ENCODE measurements at regions of chr5 and their contacts with region 1.

Region 1: GRCh38 chr5:96595300-96596090 is 66.7 kb upstream of the CAST start:
- DNase-seq: peak; percentile 69
- H3K4me3 Mint-ChIP-seq: no peak overlapping the region
- H3K27ac Mint-ChIP-seq: no peak overlapping the region
- H3K4me1 Mint-ChIP-seq: peaks cover 8% of the 10 kb centered on the region
- H3K27me3 Mint-ChIP-seq: peaks cover 31% of the 10 kb centered on the region

Region 2: DNA sequence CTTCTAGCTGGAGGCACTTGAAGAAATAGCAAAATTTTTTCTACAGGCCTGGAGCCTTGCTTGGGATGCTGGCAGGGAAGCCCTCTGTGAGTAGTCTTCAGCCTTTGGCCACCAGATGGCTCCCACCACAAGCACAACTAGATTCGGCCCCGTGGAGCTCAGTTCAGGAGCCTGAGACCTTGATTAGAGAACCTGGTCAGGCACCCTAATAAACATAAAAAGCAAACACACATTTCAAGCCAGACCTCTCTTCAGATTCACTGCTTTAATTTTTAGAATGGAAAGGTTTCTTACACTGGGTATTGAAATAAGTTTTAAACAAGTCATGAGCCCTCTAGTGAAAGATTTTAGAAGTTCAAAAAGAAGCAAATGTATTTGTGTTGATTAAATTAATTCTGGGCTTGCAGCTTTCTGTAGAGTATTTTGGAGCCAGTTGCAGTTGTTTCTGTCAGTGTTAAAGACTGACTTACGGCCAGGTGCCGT is 814.4 kb before region 1 on chr5:
- intact Hi-C with region 1: loop called (anchors 10 kb)
- DNase-seq: peak; percentile 90
- H3K4me3 Mint-ChIP-seq: peak overlapping the region; percentile 56
- H3K27ac Mint-ChIP-seq: no peak overlapping the region
- H3K4me1 Mint-ChIP-seq: peaks cover 16% of the 10 kb centered on the region
- H3K27me3 Mint-ChIP-seq: peaks cover 7% of the 10 kb centered on the region

Region 3: DNA sequence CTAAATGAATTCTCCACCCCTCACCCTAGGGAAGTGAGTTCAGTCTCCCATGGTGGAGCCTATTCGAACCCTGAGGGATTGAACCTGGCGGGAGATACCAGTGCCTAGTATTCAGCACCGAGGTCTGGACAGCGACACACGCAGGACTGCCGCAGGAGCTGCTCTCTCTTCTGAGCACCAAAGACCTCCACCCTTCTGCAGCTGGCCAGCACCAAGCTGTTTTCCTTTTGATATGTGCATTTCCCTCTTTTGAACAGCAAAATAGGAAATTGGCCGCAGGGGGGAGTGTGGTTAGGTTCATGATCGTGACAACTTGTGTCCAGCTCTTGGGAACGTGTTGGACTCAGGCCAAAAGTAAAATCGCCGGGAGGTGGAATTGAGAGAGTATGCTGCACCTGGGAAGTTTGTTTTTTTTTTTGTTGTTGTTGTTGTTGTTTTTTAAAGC is 161.3 kb before region 1 on chr5:
- intact Hi-C with region 1: loop called (anchors 10 kb)
- DNase-seq: peak; percentile 81
- H3K4me3 Mint-ChIP-seq: no peak overlapping the region
- H3K27ac Mint-ChIP-seq: no peak overlapping the region
- H3K4me1 Mint-ChIP-seq: peaks cover 12% of the 10 kb centered on the region
- H3K27me3 Mint-ChIP-seq: peaks cover 64% of the 10 kb centered on the region

Region 4: DNA sequence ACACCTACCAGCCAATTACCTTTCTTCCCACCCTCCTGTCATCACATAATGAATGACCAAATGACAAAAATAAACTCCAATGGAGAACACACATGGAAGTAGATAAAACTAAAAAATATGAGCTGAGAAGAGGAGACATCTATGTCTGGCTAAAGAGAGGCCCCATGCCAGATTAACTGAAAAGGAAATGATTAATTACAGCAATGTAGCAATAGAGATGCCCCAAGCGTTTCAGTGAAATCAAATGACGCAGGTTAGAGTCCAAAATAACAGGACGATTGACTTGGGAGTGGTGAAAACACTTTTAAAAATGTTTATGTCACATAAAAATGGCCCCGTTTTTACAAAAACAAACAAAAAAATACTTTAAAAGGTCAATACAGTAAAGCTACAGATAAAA is 102.8 kb before region 1 on chr5:
- intact Hi-C with region 1: no loop called
- DNase-seq: no peak
- H3K4me3 Mint-ChIP-seq: no peak overlapping the region
- H3K27ac Mint-ChIP-seq: no peak overlapping the region
- H3K4me1 Mint-ChIP-seq: no peaks in the 10 kb centered on the region
- H3K27me3 Mint-ChIP-seq: peaks cover 11% of the 10 kb centered on the region

Region 5: DNA sequence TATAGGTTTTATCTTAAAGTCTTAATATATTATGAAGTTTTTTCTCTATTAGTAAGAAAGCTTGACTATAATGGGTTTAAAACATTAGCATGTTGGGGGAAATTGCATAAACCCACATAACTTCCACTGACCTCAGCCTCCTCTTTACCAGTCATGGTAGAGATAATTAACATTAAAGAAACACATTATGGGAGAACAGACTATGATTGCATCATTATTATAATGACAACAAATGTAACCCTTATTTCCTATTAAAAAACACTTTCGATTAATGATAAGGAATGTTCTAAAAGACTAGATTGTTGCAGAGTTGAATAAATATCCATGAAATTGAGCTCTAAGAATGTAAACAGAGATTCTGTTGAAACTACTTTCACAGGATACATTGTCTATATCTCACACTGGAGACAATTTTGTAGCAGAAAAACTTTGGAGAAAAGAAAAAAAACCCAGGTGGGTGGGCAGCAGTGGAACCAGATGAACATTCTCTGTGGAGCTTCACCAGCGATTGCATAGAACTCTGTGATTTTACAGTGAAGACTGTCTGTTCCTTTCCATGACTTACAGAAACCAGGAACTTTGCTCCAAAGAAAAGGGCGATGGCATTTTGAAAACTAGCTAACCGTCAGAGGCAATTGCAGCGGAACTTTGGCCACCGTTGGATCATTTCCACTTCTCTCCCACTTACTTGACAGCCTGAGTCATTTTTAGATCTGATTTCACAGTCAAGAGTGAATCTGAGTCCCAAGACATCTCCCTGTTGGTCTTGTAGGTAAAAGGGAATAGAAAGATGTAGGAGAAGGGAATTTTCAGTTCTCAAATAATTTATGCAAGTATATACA is 259.8 kb after region 1 on chr5:
- intact Hi-C with region 1: no loop called
- DNase-seq: no peak
- H3K4me3 Mint-ChIP-seq: no peak overlapping the region
- H3K27ac Mint-ChIP-seq: no peak overlapping the region
- H3K4me1 Mint-ChIP-seq: no peaks in the 10 kb centered on the region
- H3K27me3 Mint-ChIP-seq: peaks cover 8% of the 10 kb centered on the region